ENCODE measurements at regions of chr10 and their contacts with region 1.

Region 1: DNA sequence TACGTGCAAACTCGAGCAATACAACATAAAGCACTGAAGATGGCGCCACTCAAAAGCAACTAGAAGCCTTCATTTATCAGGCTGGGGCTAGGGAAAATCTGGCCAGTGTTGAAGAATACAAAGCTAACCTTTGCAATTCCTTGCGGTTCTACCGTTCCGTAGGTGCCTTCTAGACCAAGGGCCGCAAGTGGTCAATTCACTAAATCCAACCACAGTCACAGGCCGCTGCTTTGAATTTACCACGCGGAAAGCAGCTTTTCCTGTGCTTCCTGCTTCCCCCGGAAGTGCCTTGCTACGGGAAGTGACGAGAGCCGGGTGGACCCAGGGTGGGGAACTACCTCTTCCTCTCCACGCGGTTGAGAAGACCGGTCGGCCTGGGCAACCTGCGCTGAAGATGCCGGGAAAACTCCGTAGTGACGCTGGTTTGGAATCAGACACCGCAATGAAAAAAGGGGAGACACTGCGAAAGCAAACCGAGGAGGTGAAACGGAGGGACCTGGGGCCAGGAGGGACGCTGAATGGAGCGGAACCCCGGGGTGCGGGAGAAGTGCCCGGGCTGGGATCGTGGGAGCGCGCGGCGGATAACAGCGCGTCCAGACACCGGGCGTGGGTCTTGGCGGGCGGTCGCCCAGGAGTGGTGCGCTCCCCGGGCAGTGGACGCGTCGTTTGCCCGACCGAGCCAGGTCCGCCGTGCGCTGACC is at the start of gene DDX21:
- DNase-seq: peak; percentile 63 to 81
- H3K4me3 ChIP-seq: peak within 1 kb of the TSS; percentile 92 to 99 (median 96)
- H3K27ac ChIP-seq: peak within 1 kb of the TSS; percentile 91
- H3K4me1 ChIP-seq: no peaks in the 10 kb centered on the region; a peak in 3 of 7 replicates
- H3K27me3 ChIP-seq: no peaks in the 10 kb centered on the region
- CTCF ChIP-seq: peak in 2 of 3 experiments; percentile 36 to 73; a peak in 3 of 4 replicates
- EP300 ChIP-seq: no peak
- POLR2A ChIP-seq: peak; percentile 56 to 74; a peak in 2 of 3 replicates
- RAD21 ChIP-seq: peak in 1 of 2 experiments; percentile 8; a peak in 1 of 4 replicates
- total RNA-seq, gene DDX21: 189 and 195 TPM in 2 replicates

Region 2: DNA sequence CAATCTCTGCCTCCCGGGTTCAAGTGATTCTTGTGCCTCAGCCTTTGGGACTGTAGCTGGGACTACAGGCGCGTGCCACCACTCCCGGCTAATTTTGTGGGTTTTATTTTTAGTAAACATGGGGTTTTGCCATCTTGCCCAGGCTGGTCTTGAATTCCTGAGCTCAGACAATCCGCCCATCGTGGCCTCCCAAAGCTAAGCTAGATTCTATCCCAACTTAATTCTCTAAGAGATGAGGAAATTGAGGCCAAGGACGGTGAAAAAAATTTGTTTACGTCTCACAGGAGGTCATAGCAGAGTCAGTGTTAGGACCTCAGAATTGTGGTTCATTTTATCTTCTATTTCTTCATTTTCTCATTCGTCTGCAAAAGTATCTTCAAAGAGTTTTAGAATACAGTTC is 228.8 kb before region 1 on chr10:
- CTCF ChIA-PET with region 1: interaction called, 3 read pairs
- POLR2A ChIA-PET with region 1: interaction called, 11 read pairs
- DNase-seq: no peak
- H3K4me3 ChIP-seq: no peak overlapping the region
- H3K27ac ChIP-seq: no peak overlapping the region
- H3K4me1 ChIP-seq: peaks cover 0 to 4% (median 1%) of the 10 kb centered on the region in 4 experiments; a peak in 4 of 7 replicates
- H3K27me3 ChIP-seq: no peaks in the 10 kb centered on the region
- CTCF ChIP-seq: no peak
- EP300 ChIP-seq: no peak
- POLR2A ChIP-seq: no peak
- RAD21 ChIP-seq: no peak

Region 3: GRCh38 chr10:68742397-68742796 is 213.6 kb before region 1 on chr10:
- CTCF ChIA-PET with region 1: no interaction called
- POLR2A ChIA-PET with region 1: no interaction called
- DNase-seq: no peak
- H3K4me3 ChIP-seq: no peak overlapping the region
- H3K27ac ChIP-seq: no peak overlapping the region
- H3K4me1 ChIP-seq: no peaks in the 10 kb centered on the region
- H3K27me3 ChIP-seq: no peaks in the 10 kb centered on the region
- CTCF ChIP-seq: no peak
- EP300 ChIP-seq: no peak
- POLR2A ChIP-seq: no peak
- RAD21 ChIP-seq: no peak

Region 4: DNA sequence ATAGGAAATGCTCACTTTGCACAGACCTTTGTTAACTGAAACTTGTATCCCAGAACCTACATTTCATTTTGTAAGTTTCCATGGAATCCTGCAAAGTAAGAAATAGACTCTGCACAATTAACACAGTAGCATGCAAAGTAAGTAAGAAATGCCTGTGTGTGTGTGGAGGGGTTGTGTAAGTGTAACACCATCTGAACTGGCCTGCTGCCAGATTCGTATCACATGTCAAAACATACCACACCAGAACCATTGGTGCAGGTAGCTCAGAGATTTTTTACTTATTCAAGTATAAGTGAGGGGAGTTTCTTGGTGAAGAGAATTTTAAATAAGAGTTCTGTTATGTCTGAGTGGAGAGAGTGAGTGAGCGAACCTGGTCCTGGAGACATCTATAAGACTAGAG is 17.9 kb before region 1 on chr10:
- CTCF ChIA-PET with region 1: no interaction called
- POLR2A ChIA-PET with region 1: interaction called, 17 read pairs
- DNase-seq: no peak
- H3K4me3 ChIP-seq: no peak overlapping the region
- H3K27ac ChIP-seq: no peak overlapping the region
- H3K4me1 ChIP-seq: no peaks in the 10 kb centered on the region
- H3K27me3 ChIP-seq: no peaks in the 10 kb centered on the region
- CTCF ChIP-seq: no peak
- EP300 ChIP-seq: no peak
- POLR2A ChIP-seq: no peak
- RAD21 ChIP-seq: no peak

Region 5: DNA sequence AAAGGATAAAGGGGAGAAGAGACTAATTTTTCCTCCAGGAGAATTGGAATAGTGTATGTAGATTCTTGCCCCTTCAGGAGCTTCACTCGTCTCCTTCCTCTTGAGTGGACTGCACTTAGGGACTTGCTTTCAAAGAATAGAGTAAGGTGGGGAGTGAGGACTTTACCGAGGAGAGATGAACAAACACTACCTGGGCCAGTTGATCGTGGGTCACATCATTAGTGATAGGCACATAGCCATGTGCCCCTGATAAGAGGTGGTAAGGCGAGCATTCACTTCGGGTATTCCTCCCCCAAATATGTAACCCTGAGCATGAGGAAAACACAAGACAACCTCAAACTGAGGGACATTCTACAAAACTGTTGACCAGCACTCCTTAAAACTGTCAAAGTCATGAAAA is 18.0 kb after region 1 on chr10:
- CTCF ChIA-PET with region 1: interaction called, 7 read pairs
- POLR2A ChIA-PET with region 1: interaction called, 91 read pairs
- DNase-seq: no peak
- H3K4me3 ChIP-seq: no peak overlapping the region
- H3K27ac ChIP-seq: no peak overlapping the region
- H3K4me1 ChIP-seq: no peaks in the 10 kb centered on the region
- H3K27me3 ChIP-seq: no peaks in the 10 kb centered on the region
- CTCF ChIP-seq: no peak
- EP300 ChIP-seq: no peak
- POLR2A ChIP-seq: no peak
- RAD21 ChIP-seq: no peak

Region 6: DNA sequence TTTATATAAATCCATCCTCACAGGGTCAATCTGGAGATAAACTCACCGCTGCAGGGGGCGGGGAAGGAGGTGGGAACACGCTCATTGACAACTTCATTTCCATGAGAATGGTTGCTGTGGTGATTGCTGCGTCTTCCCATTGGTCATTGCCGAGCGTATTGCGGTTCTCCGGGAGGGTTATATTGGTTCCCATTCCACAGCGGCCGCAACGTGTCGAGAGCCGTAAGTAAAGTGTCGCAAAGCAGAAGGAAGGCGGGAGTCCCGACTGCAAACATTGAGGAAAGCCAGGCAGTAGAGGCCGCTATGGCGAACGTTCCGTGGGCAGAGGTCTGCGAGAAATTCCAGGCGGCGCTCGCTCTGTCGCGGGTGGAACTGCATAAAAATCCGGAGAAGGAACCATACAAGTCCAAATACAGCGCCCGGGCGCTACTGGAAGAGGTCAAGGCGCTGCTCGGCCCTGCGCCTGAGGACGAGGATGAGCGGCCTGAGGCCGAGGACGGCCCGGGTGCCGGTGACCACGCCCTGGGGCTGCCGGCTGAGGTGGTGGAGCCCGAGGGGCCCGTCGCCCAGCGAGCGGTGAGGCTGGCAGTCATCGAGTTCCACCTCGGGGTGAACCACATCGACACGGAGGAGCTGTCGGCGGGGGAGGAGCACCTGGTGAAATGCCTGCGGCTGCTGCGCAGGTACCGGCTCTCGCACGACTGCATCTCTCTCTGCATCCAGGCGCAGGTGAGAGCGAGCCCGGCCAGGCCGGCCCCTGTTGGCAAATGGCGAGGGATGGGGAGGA is 32.7 kb after region 1 on chr10 and contains the start of gene KIFBP:
- CTCF ChIA-PET with region 1: interaction called, 4 read pairs
- POLR2A ChIA-PET with region 1: interaction called, 91 read pairs
- DNase-seq: peak; percentile 89 to 93
- H3K4me3 ChIP-seq: peak within 1 kb of the TSS; percentile 51 to 99 (median 82)
- H3K27ac ChIP-seq: peak within 1 kb of the TSS; percentile 67
- H3K4me1 ChIP-seq: no peaks in the 10 kb centered on the region; a peak in 1 of 7 replicates
- H3K27me3 ChIP-seq: no peaks in the 10 kb centered on the region
- CTCF ChIP-seq: peak; percentile 44 to 58 (median 50); a peak in 3 of 4 replicates
- EP300 ChIP-seq: no peak
- POLR2A ChIP-seq: peak; percentile 82 to 93
- RAD21 ChIP-seq: peak in 1 of 2 experiments; percentile 15; a peak in 2 of 4 replicates
- total RNA-seq, gene KIFBP: 34.1 and 34.6 TPM in 2 replicates

Region 7: DNA sequence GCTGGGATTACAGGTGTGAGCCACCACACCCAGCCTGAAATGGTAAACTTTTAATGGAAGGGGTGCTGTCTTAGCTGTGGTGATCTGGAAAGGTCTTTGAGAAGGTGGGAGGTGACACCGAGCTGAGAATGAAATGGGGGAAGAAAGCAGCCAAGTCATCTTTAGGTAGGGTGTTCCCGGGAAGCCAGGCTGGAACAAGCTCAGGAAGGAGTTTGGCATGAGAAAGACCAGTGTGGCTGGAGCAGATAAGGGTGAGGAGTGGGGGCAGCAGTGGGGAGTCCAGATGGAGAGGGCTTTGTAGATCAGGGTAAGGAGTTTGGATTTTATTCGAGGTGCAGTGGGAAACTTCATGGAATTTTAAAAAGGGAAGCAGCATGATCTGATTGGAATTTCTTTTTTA is 62.6 kb after region 1 on chr10:
- CTCF ChIA-PET with region 1: no interaction called
- POLR2A ChIA-PET with region 1: no interaction called
- DNase-seq: peak in 1 of 2 experiments; percentile 39
- H3K4me3 ChIP-seq: no peak overlapping the region
- H3K27ac ChIP-seq: no peak overlapping the region
- H3K4me1 ChIP-seq: no peaks in the 10 kb centered on the region
- H3K27me3 ChIP-seq: no peaks in the 10 kb centered on the region
- CTCF ChIP-seq: no peak
- EP300 ChIP-seq: no peak
- POLR2A ChIP-seq: no peak
- RAD21 ChIP-seq: no peak

Region 8: GRCh38 chr10:69290993-69291392 is 335.0 kb after region 1 on chr10:
- CTCF ChIA-PET with region 1: no interaction called
- POLR2A ChIA-PET with region 1: no interaction called
- DNase-seq: no peak
- H3K4me3 ChIP-seq: no peak overlapping the region
- H3K27ac ChIP-seq: no peak overlapping the region
- H3K4me1 ChIP-seq: no peaks in the 10 kb centered on the region; a peak in 1 of 7 replicates
- H3K27me3 ChIP-seq: no peaks in the 10 kb centered on the region
- CTCF ChIP-seq: no peak
- EP300 ChIP-seq: no peak
- POLR2A ChIP-seq: no peak
- RAD21 ChIP-seq: no peak

Measured in H1 (cell line).